ENCODE measurements at regions of chr15 and their contacts with region 1.

Region 1: GRCh38 chr15:64046347-64047153 is at the start of gene DAPK2:
- DNase-seq: peak; percentile 75 to 90 (median 84)
- ATAC-seq: peak; percentile 60 to 91 (median 86)
- H3K4me3 ChIP-seq: peak within 1 kb of the TSS; percentile 56 to 85 (median 72)
- H3K27ac ChIP-seq: peak within 1 kb of the TSS in 11 of 12 donors; percentile 60 to 88 (median 80)
- H3K4me1 ChIP-seq: peaks cover 0 to 63% (median 29%) of the 10 kb centered on the region in 12 donors
- H3K27me3 ChIP-seq: no peaks in the 10 kb centered on the region
- CTCF ChIP-seq: peak; percentile 61 to 94 (median 87)
- POLR2A ChIP-seq: no peak
- total RNA-seq, gene DAPK2: 20.4 to 56.2 (median 26.4) TPM

Region 2: GRCh38 chr15:63818191-63818590 is 228.4 kb before region 1 on chr15:
- intact Hi-C with region 1: loop called in 1 of 10 experiments (anchors 5 kb)
- DNase-seq: no peak
- ATAC-seq: peak in 2 of 4 donors; percentile 34 to 65
- H3K4me3 ChIP-seq: no peak overlapping the region
- H3K27ac ChIP-seq: peak overlapping the region in 1 of 12 donors; percentile 1
- H3K4me1 ChIP-seq: peaks cover 0 to 84% (median 62%) of the 10 kb centered on the region in 12 donors
- H3K27me3 ChIP-seq: no peaks in the 10 kb centered on the region
- CTCF ChIP-seq: peak in 1 of 12 donors; percentile 7
- POLR2A ChIP-seq: no peak

Region 3: GRCh38 chr15:63891079-63891767 is 155.3 kb before region 1 on chr15:
- intact Hi-C with region 1: loop called in 2 of 10 experiments (anchors 5 to 10 kb)
- DNase-seq: peak; percentile 73 to 88 (median 80)
- ATAC-seq: peak; percentile 24 to 86 (median 80)
- H3K4me3 ChIP-seq: no peak overlapping the region
- H3K27ac ChIP-seq: peak overlapping the region in 1 of 12 donors; percentile 63
- H3K4me1 ChIP-seq: peaks cover 0 to 72% (median 5%) of the 10 kb centered on the region in 12 donors
- H3K27me3 ChIP-seq: no peaks in the 10 kb centered on the region
- CTCF ChIP-seq: peak; percentile 80 to 94 (median 87)
- POLR2A ChIP-seq: no peak

Region 4: DNA sequence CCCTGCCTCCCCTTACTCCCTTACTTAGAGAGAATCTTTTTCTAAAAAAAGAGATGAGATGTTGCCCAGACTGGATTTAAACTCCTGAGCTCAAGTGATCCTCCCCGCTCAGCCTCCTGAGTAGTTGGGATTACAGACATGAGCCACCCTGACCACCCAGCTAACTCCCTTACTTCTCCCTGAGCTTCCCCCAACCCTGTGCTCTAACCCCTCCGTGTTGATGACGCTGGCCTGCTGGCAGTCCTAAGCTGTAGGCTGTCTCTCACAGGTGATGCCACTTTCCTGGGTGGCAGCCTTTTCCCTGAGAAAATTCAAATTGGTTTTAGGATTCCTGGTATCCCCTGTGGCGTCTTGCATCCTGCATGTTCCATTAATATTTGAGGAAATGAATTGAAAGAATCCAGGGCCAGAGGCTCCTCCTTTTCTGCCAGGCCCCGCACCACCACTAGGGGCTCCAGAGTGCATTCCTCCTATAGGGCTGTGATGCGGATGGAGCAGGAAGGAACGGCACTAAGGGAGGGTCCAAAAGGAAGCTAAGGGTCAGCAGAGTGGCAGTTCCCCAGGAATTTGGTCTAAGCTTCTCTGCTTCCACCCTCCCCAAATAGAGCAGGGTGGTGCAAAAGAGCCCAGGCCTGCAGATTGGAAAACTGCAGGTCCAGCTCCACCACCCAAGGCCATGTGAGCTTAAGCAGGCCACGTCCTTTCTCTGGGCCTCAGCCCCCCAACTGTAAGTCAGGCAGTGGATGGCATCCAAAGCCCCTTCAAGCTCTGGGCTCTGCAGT is 101.4 kb before region 1 on chr15:
- intact Hi-C with region 1: loop called (anchors 2 to 10 kb)
- DNase-seq: peak; percentile 68 to 79 (median 74)
- ATAC-seq: peak; percentile 42 to 82 (median 78)
- H3K4me3 ChIP-seq: no peak overlapping the region
- H3K27ac ChIP-seq: peak overlapping the region in 7 of 12 donors; percentile 22 to 62 (median 39)
- H3K4me1 ChIP-seq: peaks cover 3 to 39% (median 29%) of the 10 kb centered on the region in 12 donors
- H3K27me3 ChIP-seq: no peaks in the 10 kb centered on the region
- CTCF ChIP-seq: peak; percentile 81 to 94 (median 90)
- POLR2A ChIP-seq: no peak

Region 5: DNA sequence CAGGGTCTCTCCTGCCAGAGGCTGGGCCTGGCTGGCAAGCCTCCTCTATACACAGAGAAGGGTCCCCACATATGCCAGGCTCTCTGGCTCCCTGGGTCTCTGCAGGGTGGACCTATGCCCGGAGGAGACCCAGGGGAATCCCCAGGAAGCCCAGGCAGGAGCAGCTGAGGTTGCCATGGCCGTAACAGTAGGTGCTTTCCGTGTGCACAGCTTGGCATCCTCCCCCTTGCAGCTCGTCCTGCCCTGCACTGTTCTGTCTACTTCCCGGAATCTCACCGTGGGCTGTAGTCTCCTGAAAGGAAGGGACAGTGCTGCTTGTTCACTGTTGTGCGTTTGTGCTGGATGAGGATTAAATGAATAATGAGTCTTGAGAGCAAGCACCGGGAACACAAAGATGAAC is 48.1 kb before region 1 on chr15:
- intact Hi-C with region 1: loop called in 2 of 10 experiments (anchors 5 to 10 kb)
- DNase-seq: peak in 1 of 5 donors; percentile 24
- ATAC-seq: peak; percentile 12 to 48 (median 42)
- H3K4me3 ChIP-seq: no peak overlapping the region
- H3K27ac ChIP-seq: peak overlapping the region in 9 of 12 donors; percentile 12 to 67 (median 54)
- H3K4me1 ChIP-seq: peaks cover 10 to 55% (median 31%) of the 10 kb centered on the region in 12 donors
- H3K27me3 ChIP-seq: no peaks in the 10 kb centered on the region
- CTCF ChIP-seq: no peak
- POLR2A ChIP-seq: no peak

Measured in heart left ventricle (tissue), 16 donors.